B cell (primary cell): ENCODE measurements at regions of chr4 and their contacts with region 1.

Region 1: GRCh38 chr4:10116580-10117358 is at the start of gene WDR1:
- DNase-seq: peak; percentile 95
- ATAC-seq: peak; percentile 85
- H3K4me3 ChIP-seq: peak within 1 kb of the TSS; percentile 74 to 90 (median 82)
- H3K4me3 Mint-ChIP-seq: peak within 1 kb of the TSS; percentile 95
- H3K27ac ChIP-seq: peak within 1 kb of the TSS; percentile 98
- H3K27ac Mint-ChIP-seq: peak within 1 kb of the TSS; percentile 96
- H3K4me1 ChIP-seq: peaks cover 27 to 50% of the 10 kb centered on the region in 2 donors
- H3K4me1 Mint-ChIP-seq: peaks cover 58% of the 10 kb centered on the region
- H3K27me3 ChIP-seq: no peaks in the 10 kb centered on the region
- H3K27me3 Mint-ChIP-seq: no peaks in the 10 kb centered on the region
- CTCF ChIP-seq: no peak
- total RNA-seq, gene WDR1: 198 and 217 TPM in 2 replicates

Region 2: GRCh38 chr4:9691238-9692065 is 425.3 kb before region 1 on chr4:
- CTCF ChIA-PET with region 1: interaction called, 6 read pairs
- POLR2A ChIA-PET with region 1: interaction called, 6 read pairs
- intact Hi-C with region 1: loop called (anchors 1 kb)
- DNase-seq: peak; percentile 93
- ATAC-seq: peak; percentile 100
- H3K4me3 ChIP-seq: peak overlapping the region in 4 of 5 experiments; percentile 50 to 68 (median 66)
- H3K4me3 Mint-ChIP-seq: peak overlapping the region; percentile 90
- H3K27ac ChIP-seq: peak overlapping the region; percentile 42 to 70
- H3K27ac Mint-ChIP-seq: peak overlapping the region; percentile 88
- H3K4me1 ChIP-seq: peaks cover 3 to 9% of the 10 kb centered on the region in 2 donors
- H3K4me1 Mint-ChIP-seq: peaks cover 8% of the 10 kb centered on the region
- H3K27me3 ChIP-seq: no peaks in the 10 kb centered on the region
- H3K27me3 Mint-ChIP-seq: peaks cover 2% of the 10 kb centered on the region
- CTCF ChIP-seq: no peak

Region 3: GRCh38 chr4:10100734-10101216 is 16.0 kb before region 1 on chr4:
- CTCF ChIA-PET with region 1: interaction called, 5 read pairs
- POLR2A ChIA-PET with region 1: interaction called, 7 read pairs
- intact Hi-C with region 1: loop called (anchors 1 kb)
- DNase-seq: peak; percentile 26
- ATAC-seq: peak; percentile 57
- H3K4me3 ChIP-seq: no peak overlapping the region
- H3K4me3 Mint-ChIP-seq: no peak overlapping the region
- H3K27ac ChIP-seq: peak overlapping the region in 1 of 2 donors; percentile 61
- H3K27ac Mint-ChIP-seq: peak overlapping the region; percentile 72
- H3K4me1 ChIP-seq: peaks cover 18 to 27% of the 10 kb centered on the region in 2 donors
- H3K4me1 Mint-ChIP-seq: peaks cover 55% of the 10 kb centered on the region
- H3K27me3 ChIP-seq: no peaks in the 10 kb centered on the region
- H3K27me3 Mint-ChIP-seq: no peaks in the 10 kb centered on the region
- CTCF ChIP-seq: no peak

Region 4: DNA sequence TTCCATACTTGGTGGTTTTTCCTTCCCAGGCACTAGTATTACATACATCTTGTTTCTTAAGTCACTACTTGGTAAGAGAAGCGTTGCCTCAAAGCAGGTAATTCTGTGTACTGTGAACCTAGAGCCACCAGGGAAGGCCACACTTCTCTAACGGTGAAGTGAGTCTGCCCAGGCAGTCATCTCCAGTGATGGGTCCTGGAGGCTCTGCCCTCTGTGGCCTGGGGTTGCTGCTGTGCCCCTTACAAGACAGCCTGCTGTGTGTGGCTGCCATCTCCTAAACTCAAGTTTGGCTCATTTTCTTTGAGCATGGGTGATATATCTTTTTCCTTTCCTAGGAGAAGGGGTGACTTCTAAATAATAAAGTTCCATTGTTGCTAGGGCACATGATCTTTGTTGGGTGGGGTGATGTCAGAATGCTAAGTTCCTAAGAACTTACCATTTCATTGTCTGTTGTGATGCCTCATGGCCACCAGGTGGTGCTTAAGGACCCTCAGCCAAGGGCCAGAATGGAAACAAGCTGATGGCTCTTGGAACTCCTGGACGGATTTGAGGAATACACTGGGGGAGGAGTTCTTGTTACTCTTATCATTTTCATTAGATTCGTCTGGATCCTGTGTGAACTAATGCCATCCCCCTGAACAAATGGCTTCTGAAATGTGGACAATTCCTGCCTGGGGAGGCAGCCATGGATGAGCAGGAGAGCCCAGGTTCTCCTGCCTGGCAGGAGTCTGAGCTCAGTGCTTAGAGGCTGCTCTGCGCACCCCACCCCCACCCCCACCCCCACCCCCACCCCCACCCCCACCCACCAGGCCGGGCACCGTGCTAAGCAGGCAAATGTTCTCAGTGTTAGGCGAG is 40.9 kb after region 1 on chr4:
- CTCF ChIA-PET with region 1: interaction called, 11 read pairs
- POLR2A ChIA-PET with region 1: interaction called, 5 read pairs
- intact Hi-C with region 1: no loop called
- DNase-seq: peak; percentile 59
- ATAC-seq: peak; percentile 76
- H3K4me3 ChIP-seq: no peak overlapping the region
- H3K4me3 Mint-ChIP-seq: no peak overlapping the region
- H3K27ac ChIP-seq: no peak overlapping the region
- H3K27ac Mint-ChIP-seq: no peak overlapping the region
- H3K4me1 ChIP-seq: no peaks in the 10 kb centered on the region
- H3K4me1 Mint-ChIP-seq: peaks cover 5% of the 10 kb centered on the region
- H3K27me3 ChIP-seq: peaks cover 0 to 13% (median 10%) of the 10 kb centered on the region in 4 experiments
- H3K27me3 Mint-ChIP-seq: peaks cover 43% of the 10 kb centered on the region
- CTCF ChIP-seq: peak; percentile 78

Region 5: DNA sequence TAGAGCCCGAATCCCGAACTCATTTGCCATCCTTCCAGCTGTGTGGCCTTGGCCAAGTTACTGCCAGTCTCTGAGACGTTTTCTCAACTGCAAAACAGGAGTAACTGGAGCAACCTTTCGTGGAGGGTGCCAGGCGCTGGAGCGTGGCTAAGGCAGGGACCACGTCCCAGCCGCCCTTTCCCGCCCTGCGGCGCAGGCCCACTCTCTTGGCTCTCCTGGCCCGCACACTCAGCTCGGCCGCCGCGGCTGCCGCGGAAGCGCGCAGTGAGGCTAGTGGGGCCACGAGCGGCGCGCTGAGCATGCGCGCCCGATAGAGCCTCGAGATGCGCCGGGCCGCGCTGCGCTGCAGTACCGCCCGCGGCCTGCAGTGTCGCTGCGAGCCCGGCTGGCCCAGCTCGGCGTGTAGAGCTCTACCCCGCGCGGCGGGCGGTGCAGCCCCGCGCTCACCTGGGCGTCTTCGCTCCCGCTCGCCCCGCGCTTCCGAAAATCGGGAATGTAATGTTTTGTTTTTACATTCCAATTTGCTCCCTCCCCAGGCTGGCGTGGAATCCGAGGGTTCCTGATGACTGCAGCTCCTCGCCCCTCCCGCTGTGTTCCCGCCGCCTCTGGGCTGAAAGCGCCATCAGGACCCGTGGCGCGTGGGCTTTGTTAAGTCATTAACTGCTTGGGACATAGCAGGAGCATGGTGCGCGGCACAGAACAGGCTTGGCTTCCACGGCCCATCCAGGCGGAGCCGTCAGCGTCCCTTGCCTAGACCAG is 344.5 kb after region 1 on chr4:
- CTCF ChIA-PET with region 1: interaction called, 11 read pairs
- POLR2A ChIA-PET with region 1: interaction called, 14 read pairs
- intact Hi-C with region 1: loop called (anchors 1 kb)
- DNase-seq: peak; percentile 91
- ATAC-seq: peak; percentile 82
- H3K4me3 ChIP-seq: peak overlapping the region; percentile 27 to 62 (median 48)
- H3K4me3 Mint-ChIP-seq: peak overlapping the region; percentile 82
- H3K27ac ChIP-seq: no peak overlapping the region
- H3K27ac Mint-ChIP-seq: no peak overlapping the region
- H3K4me1 ChIP-seq: peaks cover 13 to 25% of the 10 kb centered on the region in 2 donors
- H3K4me1 Mint-ChIP-seq: peaks cover 21% of the 10 kb centered on the region
- H3K27me3 ChIP-seq: peaks cover 0 to 40% (median 17%) of the 10 kb centered on the region in 4 experiments
- H3K27me3 Mint-ChIP-seq: peaks cover 48% of the 10 kb centered on the region
- CTCF ChIP-seq: peak; percentile 99